ENCODE measurements at regions of chr2 and their contacts with region 1.

Region 1: DNA sequence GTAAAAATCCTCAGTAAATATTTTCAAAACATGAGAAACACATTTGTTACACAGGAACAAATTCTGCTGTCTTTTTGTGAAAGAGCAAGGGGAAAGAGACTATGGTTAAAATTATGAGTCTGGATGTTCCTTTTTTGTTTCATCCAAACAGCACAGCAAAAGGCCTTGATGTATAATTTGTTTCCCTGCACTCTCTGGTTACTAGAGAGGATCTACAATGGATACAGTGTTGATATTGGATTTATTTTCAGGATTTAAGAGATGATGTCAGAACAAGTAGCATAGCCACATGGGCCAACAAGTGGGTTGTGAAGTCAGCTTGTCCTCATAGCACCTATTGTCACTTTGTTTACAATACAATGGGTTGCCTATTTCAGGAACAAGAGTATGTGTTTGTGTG is 11.3 kb upstream of the ERBB4 start:
- DNase-seq: no peak
- ATAC-seq: no peak
- H3K4me3 ChIP-seq: no peak overlapping the region
- H3K27ac ChIP-seq: no peak overlapping the region
- H3K4me1 ChIP-seq: no peaks in the 10 kb centered on the region
- H3K27me3 ChIP-seq: no peaks in the 10 kb centered on the region
- CTCF ChIP-seq: no peak

Region 2: DNA sequence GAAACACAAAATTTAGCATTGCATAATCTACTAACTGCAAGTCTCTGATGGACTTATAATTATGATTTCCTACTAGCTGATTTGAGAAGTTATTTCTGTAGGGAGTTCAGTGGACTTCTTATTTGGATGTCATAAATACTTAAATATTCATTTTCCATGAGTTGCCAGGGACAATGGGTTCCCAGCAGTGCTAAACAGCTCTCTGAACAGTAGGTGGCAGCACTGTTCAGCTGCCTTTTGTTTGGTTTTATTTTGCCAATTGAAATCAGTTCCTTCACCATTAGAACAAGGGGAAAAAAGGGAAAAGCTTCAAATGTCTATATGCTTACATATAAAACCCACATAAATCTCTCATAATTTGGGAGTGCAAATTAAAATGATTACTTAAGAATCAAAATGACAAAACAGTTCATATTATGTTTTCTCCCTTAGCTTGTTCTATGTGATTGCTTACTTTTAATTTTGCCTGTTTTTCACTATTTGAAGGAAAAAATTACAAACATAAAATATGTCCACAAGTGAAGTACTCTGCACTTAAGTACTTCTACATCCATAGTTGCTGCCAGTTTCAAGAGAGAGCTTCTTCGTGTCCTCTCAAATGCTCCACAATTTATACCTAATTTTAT is 1094.6 kb before region 1 on chr2:
- intact Hi-C with region 1: loop called in 1 of 2 experiments (anchors 10 kb)
- DNase-seq: peak in 2 of 4 donors; percentile 60 to 71
- ATAC-seq: peak; percentile 75
- H3K4me3 ChIP-seq: no peak overlapping the region
- H3K27ac ChIP-seq: no peak overlapping the region
- H3K4me1 ChIP-seq: no peaks in the 10 kb centered on the region
- H3K27me3 ChIP-seq: no peaks in the 10 kb centered on the region
- CTCF ChIP-seq: peak; percentile 76 to 88